CD4-positive, alpha-beta memory T cell (primary cell): ENCODE measurements at regions of chr1 and their contacts with region 1.

Region 1: DNA sequence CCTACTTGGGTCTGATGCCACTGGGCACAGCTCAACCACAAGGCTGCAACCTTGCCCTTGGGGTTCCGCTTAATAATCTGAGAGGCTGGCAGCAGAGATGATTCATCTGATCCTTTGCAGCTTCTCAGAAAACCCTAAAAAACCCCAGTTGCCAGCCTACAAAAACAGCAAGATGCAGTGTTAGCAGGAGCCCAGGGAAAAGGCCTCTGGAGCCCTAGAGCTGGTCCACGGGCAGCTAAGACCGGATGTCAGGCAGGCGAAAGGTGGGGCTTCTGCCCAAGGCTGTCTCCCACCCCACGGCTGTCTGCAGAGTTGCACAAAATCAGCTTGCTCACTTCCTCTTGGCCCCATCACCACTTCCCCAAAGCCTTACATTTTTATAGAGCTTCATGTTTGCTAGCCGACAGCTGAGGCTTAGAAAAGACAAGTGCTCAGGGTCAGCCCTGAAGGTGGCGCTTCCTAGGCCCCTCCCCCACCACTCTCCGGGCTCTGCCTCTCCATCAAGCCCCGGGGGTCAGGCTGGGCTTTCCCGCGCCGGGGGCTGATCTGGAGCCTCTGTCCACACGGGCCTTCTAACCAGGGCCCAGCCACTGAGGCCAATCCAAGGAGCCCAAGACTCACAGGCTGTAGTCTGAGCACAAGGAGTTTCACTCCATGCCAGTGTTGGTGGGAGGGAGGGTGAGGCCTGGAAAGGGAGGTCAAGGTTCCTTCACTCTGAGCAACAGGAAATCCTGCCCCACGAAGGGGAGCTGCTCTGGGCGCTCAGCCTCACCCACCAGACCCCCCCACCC is 4.2 kb upstream of the ADORA3 start:
- DNase-seq: peak; percentile 48 to 78 (median 49)
- H3K4me3 ChIP-seq: peak overlapping the region; percentile 31 to 50
- H3K4me3 Mint-ChIP-seq: peak overlapping the region; percentile 63 to 89 (median 86)
- H3K27ac ChIP-seq: peak overlapping the region; percentile 76
- H3K27ac Mint-ChIP-seq: peak overlapping the region in 6 of 7 donors; percentile 93 to 98 (median 96)
- H3K4me1 ChIP-seq: peaks cover 96% of the 10 kb centered on the region
- H3K4me1 Mint-ChIP-seq: peaks cover 41 to 61% (median 53%) of the 10 kb centered on the region in 4 donors
- H3K27me3 ChIP-seq: no peaks in the 10 kb centered on the region
- H3K27me3 Mint-ChIP-seq: no peaks in the 10 kb centered on the region

Region 2: GRCh38 chr1:111441573-111442192 is 65.9 kb before region 1 on chr1:
- CTCF ChIA-PET with region 1: interaction called, 23 read pairs
- POLR2A ChIA-PET with region 1: interaction called, 45 read pairs
- intact Hi-C with region 1: no loop called
- DNase-seq: peak; percentile 62 to 72 (median 64)
- H3K4me3 ChIP-seq: no peak overlapping the region
- H3K4me3 Mint-ChIP-seq: no peak overlapping the region
- H3K27ac ChIP-seq: peak overlapping the region; percentile 12
- H3K27ac Mint-ChIP-seq: peak overlapping the region; percentile 68 to 82 (median 77)
- H3K4me1 ChIP-seq: peaks cover 26% of the 10 kb centered on the region
- H3K4me1 Mint-ChIP-seq: peaks cover 16 to 44% (median 27%) of the 10 kb centered on the region in 4 donors
- H3K27me3 ChIP-seq: no peaks in the 10 kb centered on the region
- H3K27me3 Mint-ChIP-seq: no peaks in the 10 kb centered on the region

Region 3: GRCh38 chr1:111489604-111490003 is 18.0 kb before region 1 on chr1:
- CTCF ChIA-PET with region 1: interaction called, 43 read pairs
- POLR2A ChIA-PET with region 1: interaction called, 19 read pairs
- intact Hi-C with region 1: no loop called
- DNase-seq: no peak
- H3K4me3 ChIP-seq: no peak overlapping the region
- H3K4me3 Mint-ChIP-seq: no peak overlapping the region
- H3K27ac ChIP-seq: no peak overlapping the region
- H3K27ac Mint-ChIP-seq: no peak overlapping the region
- H3K4me1 ChIP-seq: no peaks in the 10 kb centered on the region
- H3K4me1 Mint-ChIP-seq: peaks cover 0 to 4% (median 2%) of the 10 kb centered on the region in 4 donors
- H3K27me3 ChIP-seq: no peaks in the 10 kb centered on the region
- H3K27me3 Mint-ChIP-seq: no peaks in the 10 kb centered on the region

Region 4: DNA sequence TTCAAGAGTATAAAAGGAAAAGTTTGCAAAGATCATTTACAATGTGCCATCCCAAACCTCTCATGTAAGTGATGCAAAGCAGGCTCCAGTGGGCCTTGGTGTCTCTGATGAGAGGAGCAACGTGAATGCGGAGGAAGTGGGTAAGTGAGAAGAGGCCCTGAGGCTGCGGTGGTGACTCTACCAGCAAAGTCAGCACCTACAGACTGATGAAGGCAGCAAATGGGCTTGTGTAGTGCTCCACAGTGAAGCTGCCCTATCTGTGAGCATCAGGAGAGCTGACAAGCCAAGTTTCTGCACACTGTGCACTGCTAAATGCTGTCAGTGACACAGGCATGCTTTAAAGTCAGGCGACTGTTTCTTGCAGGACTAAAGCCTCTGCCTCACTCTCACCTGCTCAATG is 96.4 kb after region 1 on chr1:
- CTCF ChIA-PET with region 1: interaction called, 45 read pairs
- POLR2A ChIA-PET with region 1: interaction called, 42 read pairs
- intact Hi-C with region 1: no loop called
- DNase-seq: peak; percentile 80 to 91 (median 85)
- H3K4me3 ChIP-seq: no peak overlapping the region
- H3K4me3 Mint-ChIP-seq: peak overlapping the region; percentile 26 to 89 (median 72)
- H3K27ac ChIP-seq: peak overlapping the region; percentile 27
- H3K27ac Mint-ChIP-seq: peak overlapping the region; percentile 85 to 97 (median 91)
- H3K4me1 ChIP-seq: peaks cover 78% of the 10 kb centered on the region
- H3K4me1 Mint-ChIP-seq: peaks cover 58 to 80% (median 73%) of the 10 kb centered on the region in 4 donors
- H3K27me3 ChIP-seq: no peaks in the 10 kb centered on the region
- H3K27me3 Mint-ChIP-seq: no peaks in the 10 kb centered on the region

Region 5: GRCh38 chr1:111648806-111649205 is 141.2 kb after region 1 on chr1:
- CTCF ChIA-PET with region 1: interaction called, 30 read pairs
- POLR2A ChIA-PET with region 1: interaction called, 12 read pairs
- intact Hi-C with region 1: no loop called
- DNase-seq: no peak
- H3K4me3 ChIP-seq: no peak overlapping the region
- H3K4me3 Mint-ChIP-seq: peak overlapping the region in 5 of 8 donors; percentile 36 to 73 (median 56)
- H3K27ac ChIP-seq: peak overlapping the region; percentile 0
- H3K27ac Mint-ChIP-seq: peak overlapping the region; percentile 28 to 84 (median 77)
- H3K4me1 ChIP-seq: peaks cover 85% of the 10 kb centered on the region
- H3K4me1 Mint-ChIP-seq: peaks cover 68 to 92% (median 81%) of the 10 kb centered on the region in 4 donors
- H3K27me3 ChIP-seq: no peaks in the 10 kb centered on the region
- H3K27me3 Mint-ChIP-seq: no peaks in the 10 kb centered on the region

Region 6: GRCh38 chr1:111690306-111690617 is 182.7 kb after region 1 on chr1:
- CTCF ChIA-PET with region 1: interaction called, 13 read pairs
- POLR2A ChIA-PET with region 1: interaction called, 9 read pairs
- intact Hi-C with region 1: no loop called
- DNase-seq: no peak
- H3K4me3 ChIP-seq: no peak overlapping the region
- H3K4me3 Mint-ChIP-seq: peak overlapping the region in 2 of 8 donors; percentile 4 to 61
- H3K27ac ChIP-seq: no peak overlapping the region
- H3K27ac Mint-ChIP-seq: peak overlapping the region; percentile 2 to 76 (median 32)
- H3K4me1 ChIP-seq: peaks cover 54% of the 10 kb centered on the region
- H3K4me1 Mint-ChIP-seq: peaks cover 46 to 78% (median 67%) of the 10 kb centered on the region in 4 donors
- H3K27me3 ChIP-seq: no peaks in the 10 kb centered on the region
- H3K27me3 Mint-ChIP-seq: no peaks in the 10 kb centered on the region

Region 7: GRCh38 chr1:111747282-111747734 is 239.7 kb after region 1 on chr1:
- CTCF ChIA-PET with region 1: interaction called, 37 read pairs
- POLR2A ChIA-PET with region 1: interaction called, 7 read pairs
- intact Hi-C with region 1: loop called (anchors 1 kb)
- DNase-seq: peak; percentile 57 to 69 (median 62)
- H3K4me3 ChIP-seq: no peak overlapping the region
- H3K4me3 Mint-ChIP-seq: no peak overlapping the region
- H3K27ac ChIP-seq: no peak overlapping the region
- H3K27ac Mint-ChIP-seq: peak overlapping the region in 1 of 7 donors; percentile 29
- H3K4me1 ChIP-seq: no peaks in the 10 kb centered on the region
- H3K4me1 Mint-ChIP-seq: peaks cover 0 to 6% (median 2%) of the 10 kb centered on the region in 4 donors
- H3K27me3 ChIP-seq: no peaks in the 10 kb centered on the region
- H3K27me3 Mint-ChIP-seq: no peaks in the 10 kb centered on the region